A549 (cell line): ENCODE measurements at regions of chr12 and their contacts with region 1.

Region 1: DNA sequence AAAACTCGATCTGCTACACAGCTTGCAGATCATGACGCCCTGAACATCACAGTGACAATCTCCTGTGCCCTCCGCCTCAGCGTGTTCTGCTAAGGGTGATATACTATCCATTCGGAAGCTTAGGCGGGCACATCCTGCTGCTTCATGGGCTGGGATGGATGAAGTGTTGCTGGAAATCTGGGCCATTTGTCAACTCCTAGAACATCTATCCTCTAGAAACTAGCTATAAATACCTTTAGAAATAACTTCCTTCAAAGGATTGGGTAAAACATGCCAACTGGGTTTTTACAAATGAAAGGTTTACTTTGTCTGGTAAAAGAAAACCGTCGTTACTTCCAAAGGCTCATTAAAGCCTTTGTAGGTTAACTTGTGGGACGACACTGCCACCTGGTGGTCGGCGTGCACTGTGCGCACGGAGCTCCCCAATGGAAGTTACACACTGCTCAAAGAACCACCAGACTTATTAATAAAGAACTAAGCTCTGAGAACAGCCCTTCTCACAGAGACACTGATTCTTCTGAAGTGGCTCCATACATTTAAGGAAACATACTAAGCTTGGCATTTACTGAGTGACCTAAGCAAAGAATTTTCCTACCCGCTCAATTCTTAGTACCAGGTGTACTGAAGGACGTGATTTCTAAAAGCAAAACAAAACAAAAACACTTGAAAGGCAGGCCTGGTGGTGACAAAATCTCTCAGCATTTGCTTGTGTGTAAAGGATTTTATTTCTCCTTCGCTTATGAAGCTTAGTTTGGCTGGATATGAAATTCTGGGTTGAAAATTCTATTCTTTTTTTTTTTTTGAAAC is 21.6 kb upstream of the CACNA2D4 start:
- DNase-seq: peak; percentile 72 to 80
- ATAC-seq: peak; percentile 90 to 94
- H3K4me3 ChIP-seq: no peak overlapping the region
- H3K27ac ChIP-seq: no peak overlapping the region
- H3K4me1 ChIP-seq: peaks cover 17% of the 10 kb centered on the region
- CTCF ChIP-seq: peak; percentile 91
- EP300 ChIP-seq: no peak
- POLR2A ChIP-seq: no peak
- RAD21 ChIP-seq: peak; percentile 93 to 94

Region 2: DNA sequence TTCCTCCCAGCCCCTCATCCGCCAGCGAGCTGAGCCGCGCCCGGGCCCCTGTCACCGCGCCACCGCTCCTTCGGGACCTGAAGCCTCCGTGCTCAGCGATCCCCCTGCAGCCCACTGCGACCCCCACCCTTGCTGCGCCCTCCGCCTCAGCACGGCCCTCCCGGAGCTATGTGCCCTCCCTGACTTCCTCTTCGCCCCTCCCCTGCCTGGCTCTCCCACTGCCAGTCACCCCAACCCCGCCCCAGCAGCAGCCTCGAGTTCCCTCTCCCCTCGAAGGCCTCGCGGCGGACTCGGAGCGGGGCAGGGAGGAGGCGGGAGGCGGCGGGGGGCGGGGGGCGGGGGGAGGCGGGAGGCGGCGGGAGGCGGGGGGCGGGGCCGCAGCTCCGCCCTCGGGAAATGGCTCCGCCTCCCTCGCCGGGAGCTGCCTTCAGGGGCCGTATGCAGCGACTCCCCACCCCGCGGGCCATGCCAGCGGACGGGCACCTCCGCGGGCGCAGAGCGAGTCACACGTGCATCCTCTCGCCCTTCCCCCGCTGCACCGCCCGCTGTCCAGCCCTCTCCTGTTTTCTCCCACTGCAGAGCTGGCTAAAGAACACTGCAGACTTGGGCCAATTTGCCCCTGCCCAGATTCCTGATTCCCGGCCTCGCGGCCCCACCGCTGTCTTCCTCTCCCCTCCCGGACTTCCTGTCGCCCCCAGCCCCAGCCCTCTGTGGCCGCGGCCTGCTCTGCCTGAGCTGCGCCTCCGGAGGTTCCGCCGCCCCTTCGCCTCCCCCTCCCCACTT is 278.3 kb before region 1 on chr12:
- CTCF ChIA-PET with region 1: interaction called, 14 read pairs
- POLR2A ChIA-PET with region 1: no interaction called
- DNase-seq: peak; percentile 83 to 91
- ATAC-seq: peak; percentile 91 to 92
- H3K4me3 ChIP-seq: peak overlapping the region; percentile 45
- H3K27ac ChIP-seq: peak overlapping the region; percentile 60 to 94
- H3K4me1 ChIP-seq: peaks cover 21% of the 10 kb centered on the region; the same call in 2 of the 3 replicates
- CTCF ChIP-seq: no peak
- EP300 ChIP-seq: no peak
- POLR2A ChIP-seq: peak; percentile 68
- RAD21 ChIP-seq: no peak

Region 3: GRCh38 chr12:1787714-1788113 is 152.3 kb before region 1 on chr12:
- CTCF ChIA-PET with region 1: interaction called, 324 read pairs
- POLR2A ChIA-PET with region 1: no interaction called
- DNase-seq: no peak
- ATAC-seq: no peak
- H3K4me3 ChIP-seq: no peak overlapping the region
- H3K27ac ChIP-seq: no peak overlapping the region
- H3K4me1 ChIP-seq: no peaks in the 10 kb centered on the region
- CTCF ChIP-seq: no peak
- EP300 ChIP-seq: no peak
- POLR2A ChIP-seq: no peak
- RAD21 ChIP-seq: no peak

Region 4: DNA sequence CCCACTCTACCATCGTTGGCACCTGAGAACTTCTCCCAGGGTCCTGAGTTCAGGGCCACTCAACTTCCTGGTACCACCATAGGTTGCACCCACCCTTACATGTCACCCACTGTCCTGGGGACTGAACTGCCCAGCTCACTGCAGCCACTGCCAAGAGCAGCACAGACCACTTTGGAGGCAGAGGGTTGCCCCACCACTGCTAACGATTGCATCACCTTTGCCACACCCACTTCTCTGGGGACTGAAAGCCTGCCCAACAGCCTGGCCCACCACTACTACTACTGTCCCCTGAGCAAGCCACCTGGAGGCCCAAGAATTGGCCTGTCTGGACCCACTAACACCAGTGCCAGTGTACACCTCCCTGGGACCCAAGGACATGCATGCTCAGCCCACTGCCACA is 49.2 kb before region 1 on chr12:
- CTCF ChIA-PET with region 1: no interaction called
- POLR2A ChIA-PET with region 1: no interaction called
- DNase-seq: no peak
- ATAC-seq: no peak
- H3K4me3 ChIP-seq: no peak overlapping the region
- H3K27ac ChIP-seq: no peak overlapping the region
- H3K4me1 ChIP-seq: no peaks in the 10 kb centered on the region
- CTCF ChIP-seq: no peak
- EP300 ChIP-seq: no peak
- POLR2A ChIP-seq: no peak
- RAD21 ChIP-seq: no peak

Region 5: GRCh38 chr12:1916371-1917171 is 23.4 kb before region 1 on chr12:
- CTCF ChIA-PET with region 1: interaction called, 22 read pairs
- POLR2A ChIA-PET with region 1: no interaction called
- DNase-seq: no peak
- ATAC-seq: no peak
- H3K4me3 ChIP-seq: no peak overlapping the region
- H3K27ac ChIP-seq: no peak overlapping the region
- H3K4me1 ChIP-seq: no peaks in the 10 kb centered on the region
- CTCF ChIP-seq: no peak
- EP300 ChIP-seq: no peak
- POLR2A ChIP-seq: no peak
- RAD21 ChIP-seq: no peak

Region 6: DNA sequence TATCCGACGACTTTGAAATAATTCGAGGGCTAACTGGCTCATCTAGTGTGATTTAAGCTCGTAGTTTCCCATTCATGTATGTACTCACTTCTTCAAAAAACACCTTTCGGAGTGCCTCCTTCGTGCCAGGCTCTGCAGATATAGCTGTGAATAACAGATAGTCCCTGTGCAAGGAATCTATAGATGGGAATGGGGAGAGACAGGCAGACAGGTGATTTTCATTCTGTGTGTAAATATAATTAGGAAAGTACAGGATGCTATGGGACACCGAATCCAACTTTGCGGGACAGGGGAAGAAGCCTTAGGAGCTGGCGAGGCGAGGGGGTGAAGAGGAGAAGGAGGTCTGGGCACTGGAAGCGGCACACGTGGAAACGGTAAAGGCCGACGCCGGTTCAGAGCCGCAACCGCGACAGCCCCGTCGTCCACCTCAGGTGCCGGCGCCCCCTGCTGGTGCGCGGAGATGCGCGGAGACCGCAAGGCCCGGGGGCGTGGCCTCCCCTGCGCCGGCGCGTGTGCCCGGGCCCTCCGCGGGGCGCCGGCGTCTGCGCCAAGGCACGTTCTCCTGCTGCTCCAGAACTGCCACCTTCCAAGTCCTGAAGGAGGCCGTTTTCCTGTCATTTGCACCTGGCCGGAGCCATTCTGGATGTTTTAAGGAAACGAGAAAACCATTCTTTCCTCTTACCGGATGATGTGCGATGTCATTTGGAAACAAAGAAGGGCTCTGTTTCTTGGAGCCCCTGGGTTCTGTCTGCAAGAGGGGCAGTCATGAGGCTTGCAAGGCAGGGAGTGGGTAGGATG is 94.8 kb after region 1 on chr12:
- CTCF ChIA-PET with region 1: interaction called, 16 read pairs
- POLR2A ChIA-PET with region 1: no interaction called
- DNase-seq: peak; percentile 75 to 83
- ATAC-seq: peak; percentile 95 to 99
- H3K4me3 ChIP-seq: peak overlapping the region; percentile 34
- H3K27ac ChIP-seq: peak overlapping the region; percentile 35 to 57; a peak in 3 of 6 replicates
- H3K4me1 ChIP-seq: 0 out of 3 replicates have a peak, but pooled peaks cover 3% of the 10 kb centered on the region
- CTCF ChIP-seq: peak; percentile 85
- EP300 ChIP-seq: no peak
- POLR2A ChIP-seq: peak; percentile 37; the same call in 1 of the 2 replicates
- RAD21 ChIP-seq: peak; percentile 58 to 74

Region 7: GRCh38 chr12:2477009-2477766 is 537.2 kb after region 1 on chr12:
- CTCF ChIA-PET with region 1: no interaction called
- POLR2A ChIA-PET with region 1: no interaction called
- DNase-seq: no peak
- ATAC-seq: no peak
- H3K4me3 ChIP-seq: no peak overlapping the region
- H3K27ac ChIP-seq: no peak overlapping the region
- H3K4me1 ChIP-seq: no peaks in the 10 kb centered on the region
- CTCF ChIP-seq: no peak
- EP300 ChIP-seq: no peak
- POLR2A ChIP-seq: no peak
- RAD21 ChIP-seq: no peak